Caco-2 (cell line): ENCODE measurements at regions of chr2 and their contacts with region 1.

Region 1: DNA sequence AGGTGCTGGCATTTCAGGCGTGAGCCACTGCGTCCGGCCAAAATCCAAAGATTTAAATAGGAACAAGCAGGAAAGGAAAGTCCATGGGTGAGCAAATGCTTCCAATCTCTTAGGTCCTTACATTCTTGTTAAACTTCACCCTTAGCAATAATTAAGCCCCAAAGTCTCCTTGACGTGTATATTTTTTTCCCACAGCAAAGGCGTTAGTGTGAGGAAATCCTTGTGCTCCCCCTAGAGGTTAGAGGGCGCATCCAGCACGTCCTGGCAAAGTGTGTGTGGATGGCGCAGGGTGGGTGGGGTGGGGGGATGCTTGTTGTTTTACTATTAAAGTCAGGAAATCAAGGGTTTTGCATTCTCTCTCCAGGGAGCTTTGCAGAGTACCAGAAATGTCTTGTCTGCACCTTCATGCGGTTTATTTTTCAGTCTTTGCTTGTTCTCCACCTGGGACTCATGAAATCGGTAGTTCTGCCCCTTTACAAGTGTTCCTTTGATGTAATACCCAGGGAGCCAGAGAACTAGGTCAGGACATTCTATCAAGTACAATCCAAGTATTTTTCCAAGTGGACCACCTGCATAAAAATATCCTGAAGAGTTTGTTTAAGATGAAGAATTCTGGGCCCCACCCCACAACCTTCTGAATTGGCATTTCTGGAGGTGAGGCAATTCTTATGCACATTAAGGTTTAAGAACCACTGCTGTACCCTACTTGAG is 22.2 kb upstream of the ITSN2 start:
- DNase-seq: peak; percentile 68 to 81
- H3K4me3 ChIP-seq: no peak overlapping the region
- H3K4me3 Mint-ChIP-seq: no peak overlapping the region
- H3K27ac Mint-ChIP-seq: no peak overlapping the region
- H3K4me1 ChIP-seq: peaks cover 10% of the 10 kb centered on the region
- H3K4me1 Mint-ChIP-seq: peaks cover 9% of the 10 kb centered on the region
- H3K27me3 ChIP-seq: no peaks in the 10 kb centered on the region
- H3K27me3 Mint-ChIP-seq: no peaks in the 10 kb centered on the region
- CTCF ChIP-seq: peak; percentile 73 to 89

Region 2: DNA sequence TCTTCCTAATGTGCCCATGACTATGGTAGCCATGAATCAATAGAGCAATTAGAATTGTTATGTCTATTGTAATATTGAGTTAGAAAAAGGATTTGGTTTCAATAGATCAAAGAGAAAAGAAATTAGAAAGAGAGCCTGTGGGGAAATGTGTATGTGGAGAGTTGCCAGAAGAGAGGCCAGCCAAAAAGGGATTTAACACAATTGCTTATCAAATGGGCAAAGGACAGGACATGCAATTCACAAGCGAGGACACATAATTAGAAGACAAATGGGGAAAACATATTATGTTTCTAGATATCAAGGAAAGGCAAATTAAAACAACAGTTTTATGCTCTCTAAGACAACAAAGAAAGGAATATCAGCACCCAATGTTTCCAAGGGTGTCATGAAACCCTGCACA is 1400.7 kb before region 1 on chr2:
- CTCF ChIA-PET with region 1: no interaction called
- POLR2A ChIA-PET with region 1: no interaction called
- intact Hi-C with region 1: no loop called
- DNase-seq: no peak
- H3K4me3 ChIP-seq: no peak overlapping the region
- H3K4me3 Mint-ChIP-seq: no peak overlapping the region
- H3K27ac Mint-ChIP-seq: no peak overlapping the region
- H3K4me1 ChIP-seq: no peaks in the 10 kb centered on the region
- H3K4me1 Mint-ChIP-seq: no peaks in the 10 kb centered on the region
- H3K27me3 ChIP-seq: no peaks in the 10 kb centered on the region
- H3K27me3 Mint-ChIP-seq: peaks cover 5% of the 10 kb centered on the region
- CTCF ChIP-seq: no peak

Region 3: GRCh38 chr2:23988371-23988770 is 394.1 kb before region 1 on chr2:
- CTCF ChIA-PET with region 1: no interaction called
- POLR2A ChIA-PET with region 1: no interaction called
- intact Hi-C with region 1: loop called (anchors 2 kb)
- DNase-seq: no peak
- H3K4me3 ChIP-seq: no peak overlapping the region
- H3K4me3 Mint-ChIP-seq: no peak overlapping the region
- H3K27ac Mint-ChIP-seq: no peak overlapping the region
- H3K4me1 ChIP-seq: no peaks in the 10 kb centered on the region
- H3K4me1 Mint-ChIP-seq: no peaks in the 10 kb centered on the region
- H3K27me3 ChIP-seq: no peaks in the 10 kb centered on the region
- H3K27me3 Mint-ChIP-seq: no peaks in the 10 kb centered on the region
- CTCF ChIP-seq: peak; percentile 21 to 36

Region 4: GRCh38 chr2:24228470-24228869 is 154.0 kb before region 1 on chr2:
- CTCF ChIA-PET with region 1: interaction called, 3 read pairs
- POLR2A ChIA-PET with region 1: no interaction called
- intact Hi-C with region 1: loop called (anchors 1 kb)
- DNase-seq: peak in 1 of 2 experiments; percentile 17
- H3K4me3 ChIP-seq: no peak overlapping the region
- H3K4me3 Mint-ChIP-seq: no peak overlapping the region
- H3K27ac Mint-ChIP-seq: no peak overlapping the region
- H3K4me1 ChIP-seq: no peaks in the 10 kb centered on the region
- H3K4me1 Mint-ChIP-seq: no peaks in the 10 kb centered on the region
- H3K27me3 ChIP-seq: no peaks in the 10 kb centered on the region
- H3K27me3 Mint-ChIP-seq: no peaks in the 10 kb centered on the region
- CTCF ChIP-seq: peak; percentile 46 to 50

Region 5: GRCh38 chr2:24280161-24280560 is 102.4 kb before region 1 on chr2:
- CTCF ChIA-PET with region 1: no interaction called
- POLR2A ChIA-PET with region 1: no interaction called
- intact Hi-C with region 1: loop called (anchors 2 kb)
- DNase-seq: peak in 1 of 2 experiments; percentile 34
- H3K4me3 ChIP-seq: no peak overlapping the region
- H3K4me3 Mint-ChIP-seq: no peak overlapping the region
- H3K27ac Mint-ChIP-seq: no peak overlapping the region
- H3K4me1 ChIP-seq: peaks cover 26% of the 10 kb centered on the region; the same call in 1 of the 2 replicates
- H3K4me1 Mint-ChIP-seq: peaks cover 7% of the 10 kb centered on the region
- H3K27me3 ChIP-seq: no peaks in the 10 kb centered on the region
- H3K27me3 Mint-ChIP-seq: no peaks in the 10 kb centered on the region
- CTCF ChIP-seq: no peak

Region 6: GRCh38 chr2:24313744-24314632 is 68.5 kb before region 1 on chr2:
- CTCF ChIA-PET with region 1: no interaction called
- POLR2A ChIA-PET with region 1: no interaction called
- intact Hi-C with region 1: loop called (anchors 5 kb)
- DNase-seq: no peak
- H3K4me3 ChIP-seq: no peak overlapping the region
- H3K4me3 Mint-ChIP-seq: no peak overlapping the region
- H3K27ac Mint-ChIP-seq: no peak overlapping the region
- H3K4me1 ChIP-seq: no peaks in the 10 kb centered on the region
- H3K4me1 Mint-ChIP-seq: no peaks in the 10 kb centered on the region
- H3K27me3 ChIP-seq: no peaks in the 10 kb centered on the region
- H3K27me3 Mint-ChIP-seq: no peaks in the 10 kb centered on the region
- CTCF ChIP-seq: no peak

Region 7: DNA sequence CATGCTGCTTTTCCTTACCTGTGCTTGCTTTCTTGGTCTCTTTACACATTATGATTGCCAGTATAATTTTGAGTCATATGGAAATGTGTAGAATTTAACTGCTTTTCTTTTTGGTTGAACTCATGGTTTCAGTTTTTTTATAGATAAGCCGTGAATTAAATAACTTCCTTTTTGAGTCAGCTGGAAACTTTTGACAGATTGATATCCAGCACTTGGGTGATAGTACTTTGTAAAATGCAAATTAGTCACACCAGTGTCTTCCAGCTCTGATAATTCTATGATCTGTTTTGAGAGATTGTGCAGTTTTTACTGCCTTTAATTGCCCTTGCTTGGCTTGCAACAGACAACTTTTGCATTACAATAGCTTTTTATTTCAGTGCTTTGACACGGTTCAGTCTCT is 195.0 kb after region 1 on chr2:
- CTCF ChIA-PET with region 1: no interaction called
- POLR2A ChIA-PET with region 1: no interaction called
- intact Hi-C with region 1: no loop called
- DNase-seq: no peak
- H3K4me3 ChIP-seq: no peak overlapping the region
- H3K4me3 Mint-ChIP-seq: no peak overlapping the region
- H3K27ac Mint-ChIP-seq: no peak overlapping the region
- H3K4me1 ChIP-seq: peaks cover 42% of the 10 kb centered on the region
- H3K4me1 Mint-ChIP-seq: peaks cover 34% of the 10 kb centered on the region
- H3K27me3 ChIP-seq: no peaks in the 10 kb centered on the region
- H3K27me3 Mint-ChIP-seq: no peaks in the 10 kb centered on the region
- CTCF ChIP-seq: no peak